GM23248 (cell line): ENCODE measurements at regions of chr7 and their contacts with region 1.

Region 1: DNA sequence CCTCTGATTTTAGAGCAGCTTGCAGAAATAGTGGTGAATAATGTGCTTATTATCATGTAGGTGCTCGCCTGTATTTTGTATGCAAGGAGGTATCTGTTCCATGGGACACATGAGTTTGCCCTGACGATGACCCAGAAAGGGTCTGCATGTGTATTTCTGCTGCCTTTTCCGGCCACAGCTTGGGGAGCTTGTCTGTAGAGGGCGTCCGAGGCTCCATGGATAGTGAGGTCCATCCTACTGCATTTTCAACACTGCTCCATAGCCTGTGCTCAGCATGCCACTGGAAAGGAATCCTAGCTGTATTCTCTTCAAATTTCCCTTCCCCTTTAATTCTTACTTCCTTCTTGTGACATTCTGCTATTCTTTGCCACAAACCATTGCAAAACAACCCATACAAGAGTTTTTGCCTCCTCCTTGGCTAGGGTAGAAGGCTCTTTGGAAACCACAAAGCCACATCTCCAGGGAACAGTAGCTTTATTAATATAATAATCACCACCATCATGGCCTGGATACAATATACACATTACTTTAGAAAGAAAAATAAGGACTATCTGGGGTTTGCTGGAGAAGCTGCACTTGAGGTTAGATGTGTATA is 127.7 kb downstream of the DYNC1I1 start:
- DNase-seq: no peak
- H3K4me3 ChIP-seq: no peak overlapping the region
- H3K27ac ChIP-seq: no peak overlapping the region
- H3K4me1 ChIP-seq: no peaks in the 10 kb centered on the region
- H3K27me3 ChIP-seq: no peaks in the 10 kb centered on the region

Region 2: GRCh38 chr7:95700917-95701316 is 199.1 kb before region 1 on chr7:
- in situ Hi-C with region 1: no loop called
- DNase-seq: no peak
- H3K4me3 ChIP-seq: no peak overlapping the region
- H3K27ac ChIP-seq: no peak overlapping the region
- H3K4me1 ChIP-seq: no peaks in the 10 kb centered on the region
- H3K27me3 ChIP-seq: peaks cover 12% of the 10 kb centered on the region; the same call in 1 of the 2 replicates

Region 3: DNA sequence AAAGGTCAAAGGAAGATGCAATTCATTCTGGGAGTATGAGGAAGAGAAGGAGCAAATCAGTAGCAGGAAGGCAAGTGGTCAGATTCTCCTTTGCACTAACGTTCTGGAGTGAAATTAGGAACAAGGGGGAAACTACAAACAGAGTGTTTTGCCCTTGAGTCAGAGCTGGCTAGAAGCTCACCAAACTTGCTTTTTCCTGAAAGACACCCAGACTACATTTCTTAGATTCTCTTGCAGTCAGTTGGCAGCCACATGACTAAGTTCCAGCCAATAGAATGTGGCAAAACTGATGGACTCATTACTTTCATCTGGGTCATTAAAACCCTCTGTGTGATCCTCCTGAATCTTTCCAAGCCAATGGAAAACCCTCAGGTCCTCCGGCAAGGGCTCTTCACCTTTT is 1143.3 kb after region 1 on chr7:
- in situ Hi-C with region 1: loop called (anchors 10 kb)
- DNase-seq: peak; percentile 47
- H3K4me3 ChIP-seq: no peak overlapping the region
- H3K27ac ChIP-seq: no peak overlapping the region
- H3K4me1 ChIP-seq: no peaks in the 10 kb centered on the region
- H3K27me3 ChIP-seq: 0 out of 2 replicates have a peak, but pooled peaks cover 5% of the 10 kb centered on the region